ENCODE measurements at regions of chr13 and their contacts with region 1.

Region 1: DNA sequence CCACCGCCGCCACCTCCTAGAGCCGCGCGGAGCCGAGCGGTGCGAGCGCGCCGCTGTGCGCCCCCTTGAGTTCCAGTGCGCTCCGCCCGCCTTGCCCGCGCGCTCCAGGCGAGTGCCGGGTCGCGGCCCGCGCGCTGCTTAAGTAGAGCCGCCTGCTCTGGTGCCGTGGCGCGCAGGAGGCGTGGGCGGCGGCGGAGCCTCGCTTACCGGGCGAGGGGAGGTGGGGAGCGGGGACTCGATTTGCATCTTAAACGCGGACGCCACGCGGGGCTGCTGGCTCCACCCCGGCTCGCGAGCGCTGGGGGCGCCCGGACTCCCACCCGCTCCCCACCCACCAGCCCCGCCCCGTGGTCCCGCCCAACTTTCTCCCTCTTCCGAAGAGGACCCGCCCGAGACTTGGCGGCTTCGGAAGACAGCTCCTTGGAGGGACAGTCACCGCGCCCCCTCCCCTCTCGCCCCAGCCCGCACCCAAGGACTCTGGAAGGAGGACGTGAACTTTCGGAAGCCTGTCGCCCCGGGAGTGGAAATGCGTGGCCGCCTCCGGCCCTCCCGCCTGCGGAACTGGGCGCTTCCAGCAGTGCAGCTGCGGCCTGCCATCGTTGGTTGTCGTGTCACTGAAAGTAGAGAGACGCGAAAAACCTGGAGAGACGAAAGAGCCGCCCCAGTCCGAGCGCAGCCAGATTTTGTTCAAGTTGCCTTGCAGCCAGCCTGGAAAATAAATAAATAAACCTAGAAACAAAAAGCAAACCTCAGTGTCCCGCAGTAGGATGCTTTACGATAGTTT is at the start of gene KCTD12:
- DNase-seq: peak; percentile 72
- H3K4me3 Mint-ChIP-seq: peak within 1 kb of the TSS; percentile 94
- H3K27ac Mint-ChIP-seq: peak within 1 kb of the TSS; percentile 78
- H3K4me1 Mint-ChIP-seq: peaks cover 35% of the 10 kb centered on the region
- H3K27me3 Mint-ChIP-seq: no peaks in the 10 kb centered on the region
- CTCF ChIP-seq: peak; percentile 25
- total RNA-seq, gene KCTD12: 15.6 and 15.8 TPM in 2 replicates

Region 2: DNA sequence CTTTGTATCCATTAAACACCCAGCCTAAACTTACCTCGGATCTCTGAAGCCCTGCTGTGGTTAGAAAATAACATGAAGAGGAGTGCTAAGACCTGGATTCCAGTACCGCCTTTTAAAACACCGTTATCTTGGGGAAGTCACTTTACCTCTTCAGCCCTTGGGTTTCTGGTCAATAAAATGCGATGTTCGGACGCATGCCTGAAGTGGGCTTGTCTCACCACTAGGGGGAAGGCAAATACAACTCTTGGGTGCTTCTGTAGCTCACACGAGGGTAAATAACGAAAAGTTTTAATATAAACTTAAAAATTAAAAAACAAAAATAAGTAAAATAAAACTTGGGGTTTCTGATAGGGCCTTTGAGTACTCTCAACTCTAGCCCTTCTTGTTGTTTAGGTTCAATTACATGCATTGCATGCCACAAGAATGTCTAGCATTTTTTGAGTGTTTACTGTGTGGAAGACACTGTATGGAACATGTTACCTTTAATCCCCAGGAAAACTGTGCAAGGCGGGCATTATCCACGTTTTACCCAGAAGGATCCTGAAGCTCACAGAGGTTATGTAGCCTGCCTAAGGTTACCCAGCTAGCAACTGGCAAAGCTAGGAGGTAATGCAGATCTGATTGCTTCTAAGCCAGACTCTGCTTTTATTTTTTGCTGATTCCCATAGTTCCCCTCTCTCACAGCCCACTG is 1010.0 kb before region 1 on chr13:
- CTCF ChIA-PET with region 1: interaction called, 52 read pairs
- POLR2A ChIA-PET with region 1: interaction called, 4 read pairs
- intact Hi-C with region 1: loop called (anchors 5 kb)
- DNase-seq: peak; percentile 80
- H3K4me3 Mint-ChIP-seq: no peak overlapping the region
- H3K27ac Mint-ChIP-seq: no peak overlapping the region
- H3K4me1 Mint-ChIP-seq: no peaks in the 10 kb centered on the region
- H3K27me3 Mint-ChIP-seq: no peaks in the 10 kb centered on the region
- CTCF ChIP-seq: peak; percentile 90

Region 3: DNA sequence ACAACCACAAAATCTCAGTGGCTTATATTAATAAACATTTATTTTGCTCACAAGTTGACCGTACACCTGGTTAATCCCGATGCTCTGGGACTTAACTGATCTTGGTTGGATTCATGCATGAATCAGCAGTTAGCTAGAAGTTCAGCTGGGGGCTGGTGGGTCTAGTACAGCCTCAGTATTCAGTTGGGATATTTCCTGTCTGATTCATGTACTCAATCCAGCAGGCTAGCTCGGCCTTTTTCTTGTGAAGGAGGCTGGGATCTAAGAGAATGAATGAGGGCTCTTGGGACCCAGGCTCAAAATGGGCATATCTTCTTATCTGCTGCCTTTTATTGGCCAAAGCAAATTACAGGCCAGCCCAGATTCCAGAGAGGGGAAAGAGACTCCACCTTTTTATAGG is 179.1 kb before region 1 on chr13:
- CTCF ChIA-PET with region 1: interaction called, 10 read pairs
- POLR2A ChIA-PET with region 1: no interaction called
- intact Hi-C with region 1: no loop called
- DNase-seq: no peak
- H3K4me3 Mint-ChIP-seq: no peak overlapping the region
- H3K27ac Mint-ChIP-seq: no peak overlapping the region
- H3K4me1 Mint-ChIP-seq: peaks cover 11% of the 10 kb centered on the region
- H3K27me3 Mint-ChIP-seq: no peaks in the 10 kb centered on the region
- CTCF ChIP-seq: no peak

Region 4: DNA sequence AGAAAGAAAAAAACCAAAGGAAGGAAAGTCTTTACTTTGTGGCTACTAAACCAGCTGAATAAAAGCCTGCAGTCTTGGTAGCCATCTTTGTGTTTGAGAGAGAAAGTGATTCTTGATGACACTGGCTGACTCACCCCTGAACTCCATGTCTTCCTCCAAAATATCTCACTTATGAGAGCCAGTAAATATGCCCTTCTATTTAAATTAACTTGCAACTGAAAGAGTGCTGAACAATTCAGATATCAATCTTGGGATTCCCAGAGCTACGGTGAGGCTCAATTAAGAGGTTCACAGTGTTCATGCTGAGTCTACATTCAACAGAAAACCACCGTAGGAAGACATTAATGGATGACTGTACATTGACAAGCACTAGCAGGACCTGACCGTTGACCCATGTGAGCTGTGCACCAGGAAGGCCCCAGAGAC is 58.2 kb before region 1 on chr13:
- CTCF ChIA-PET with region 1: interaction called, 48 read pairs
- POLR2A ChIA-PET with region 1: interaction called, 12 read pairs
- intact Hi-C with region 1: no loop called
- DNase-seq: no peak
- H3K4me3 Mint-ChIP-seq: no peak overlapping the region
- H3K27ac Mint-ChIP-seq: no peak overlapping the region
- H3K4me1 Mint-ChIP-seq: peaks cover 6% of the 10 kb centered on the region
- H3K27me3 Mint-ChIP-seq: no peaks in the 10 kb centered on the region
- CTCF ChIP-seq: no peak

Region 5: DNA sequence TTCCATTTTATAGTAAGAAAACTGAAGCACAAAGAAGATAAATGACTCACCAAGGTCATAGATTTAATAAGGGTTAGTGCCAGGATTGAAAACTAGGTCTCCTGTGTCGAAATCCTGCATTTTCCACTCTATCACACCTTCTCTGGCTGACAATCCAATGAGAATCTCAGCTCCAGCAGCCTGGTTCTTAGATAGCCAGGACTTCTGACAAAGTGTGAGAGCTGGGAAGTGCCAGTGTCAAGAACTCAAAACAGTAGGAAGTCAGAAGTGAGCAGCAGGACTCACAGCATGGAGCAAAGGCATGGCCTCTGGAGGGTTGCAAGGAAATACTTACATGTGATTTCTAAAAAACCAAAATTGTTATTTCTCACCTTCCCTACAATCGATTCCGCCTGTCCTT is 24.6 kb before region 1 on chr13:
- CTCF ChIA-PET with region 1: interaction called, 14 read pairs
- POLR2A ChIA-PET with region 1: interaction called, 14 read pairs
- intact Hi-C with region 1: no loop called
- DNase-seq: peak; percentile 41
- H3K4me3 Mint-ChIP-seq: no peak overlapping the region
- H3K27ac Mint-ChIP-seq: no peak overlapping the region
- H3K4me1 Mint-ChIP-seq: peaks cover 16% of the 10 kb centered on the region
- H3K27me3 Mint-ChIP-seq: no peaks in the 10 kb centered on the region
- CTCF ChIP-seq: no peak

Region 6: GRCh38 chr13:76991796-76992547 is 105.5 kb after region 1 on chr13 and contains the start of gene CLN5:
- CTCF ChIA-PET with region 1: interaction called, 3 read pairs
- POLR2A ChIA-PET with region 1: interaction called, 17 read pairs
- intact Hi-C with region 1: no loop called
- DNase-seq: peak; percentile 92
- H3K4me3 Mint-ChIP-seq: peak within 1 kb of the TSS; percentile 93
- H3K27ac Mint-ChIP-seq: peak within 1 kb of the TSS; percentile 96
- H3K4me1 Mint-ChIP-seq: peaks cover 28% of the 10 kb centered on the region
- H3K27me3 Mint-ChIP-seq: peaks cover 3% of the 10 kb centered on the region
- CTCF ChIP-seq: no peak
- total RNA-seq, gene CLN5: 16.0 and 17.8 TPM in 2 replicates